OCI-LY7 (cell line): ENCODE measurements at regions of chr6 and their contacts with region 1.

Region 1: GRCh38 chr6:40328405-40328987 is 258.7 kb downstream of the LRFN2 start:
- DNase-seq: peak; percentile 13
- H3K4me3 ChIP-seq: no peak overlapping the region
- H3K27ac ChIP-seq: no peak overlapping the region
- H3K4me1 ChIP-seq: peaks cover 15% of the 10 kb centered on the region
- CTCF ChIP-seq: peak; percentile 83

Region 2: GRCh38 chr6:40308533-40309306 is 19.8 kb before region 1 on chr6:
- CTCF ChIA-PET with region 1: no interaction called
- POLR2A ChIA-PET with region 1: no interaction called
- intact Hi-C with region 1: no loop called
- DNase-seq: peak; percentile 59
- H3K4me3 ChIP-seq: no peak overlapping the region
- H3K27ac ChIP-seq: no peak overlapping the region
- H3K4me1 ChIP-seq: no peaks in the 10 kb centered on the region
- CTCF ChIP-seq: peak; percentile 86

Region 3: GRCh38 chr6:40532349-40533000 is 204.0 kb after region 1 on chr6:
- CTCF ChIA-PET with region 1: no interaction called
- POLR2A ChIA-PET with region 1: no interaction called
- intact Hi-C with region 1: no loop called
- DNase-seq: no peak
- H3K4me3 ChIP-seq: no peak overlapping the region
- H3K27ac ChIP-seq: no peak overlapping the region
- H3K4me1 ChIP-seq: no peaks in the 10 kb centered on the region
- CTCF ChIP-seq: no peak

Region 4: DNA sequence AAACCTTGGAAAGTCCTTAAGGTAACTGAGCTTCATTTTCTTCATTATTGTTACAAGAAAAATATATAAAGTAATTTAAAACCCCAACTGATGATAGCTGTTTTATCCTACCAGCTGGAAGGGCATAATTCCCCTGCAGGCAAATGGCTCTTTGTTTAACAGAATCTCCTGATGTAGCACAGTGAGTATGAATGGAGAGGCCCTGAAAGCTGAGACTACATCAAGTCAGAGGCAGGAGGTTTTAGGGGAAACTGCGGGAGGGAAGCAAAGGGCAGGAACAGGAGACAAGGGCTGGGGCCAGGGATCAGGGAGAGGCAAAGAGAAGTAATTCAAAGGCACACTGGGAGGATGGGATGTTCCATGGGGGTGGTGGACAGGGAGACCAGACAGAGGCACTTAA is 377.7 kb after region 1 on chr6:
- CTCF ChIA-PET with region 1: no interaction called
- POLR2A ChIA-PET with region 1: no interaction called
- intact Hi-C with region 1: no loop called
- DNase-seq: no peak
- H3K4me3 ChIP-seq: no peak overlapping the region
- H3K27ac ChIP-seq: no peak overlapping the region
- H3K4me1 ChIP-seq: peaks cover 37% of the 10 kb centered on the region
- CTCF ChIP-seq: no peak

Region 5: DNA sequence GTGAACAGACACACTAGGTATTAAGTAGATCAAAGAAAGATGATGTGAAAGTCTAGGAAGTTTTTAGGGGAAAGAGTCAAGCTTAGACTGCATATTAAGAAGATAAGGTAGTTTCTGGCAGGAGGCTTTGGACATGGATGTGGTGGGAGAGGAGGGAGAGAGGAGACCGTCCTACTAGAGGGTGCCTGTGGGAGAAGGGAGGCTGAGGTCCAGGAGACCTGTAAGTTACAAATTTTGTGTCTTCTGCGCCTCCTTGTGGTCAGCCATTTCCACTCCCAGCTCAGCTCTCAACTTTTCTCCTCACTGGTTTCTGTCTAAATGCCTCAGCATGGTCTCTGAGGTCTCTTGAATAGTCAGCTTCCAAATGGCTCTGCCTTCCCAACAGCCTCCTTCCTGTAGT is 517.1 kb after region 1 on chr6:
- CTCF ChIA-PET with region 1: no interaction called
- POLR2A ChIA-PET with region 1: no interaction called
- intact Hi-C with region 1: loop called (anchors 2 kb)
- DNase-seq: peak; percentile 36
- H3K4me3 ChIP-seq: no peak overlapping the region
- H3K27ac ChIP-seq: no peak overlapping the region
- H3K4me1 ChIP-seq: no peaks in the 10 kb centered on the region
- CTCF ChIP-seq: peak; percentile 77